ENCODE measurements at regions of chr10 and their contacts with region 1.

Region 1: GRCh38 chr10:110137142-110137545 is 70.3 kb upstream of the MXI1 start:
- DNase-seq: no peak
- H3K4me3 ChIP-seq: peak overlapping the region in 1 of 4 donors; percentile 30
- H3K27ac ChIP-seq: peak overlapping the region in 3 of 5 donors; percentile 40 to 80 (median 74)
- H3K4me1 ChIP-seq: peaks cover 4 to 15% of the 10 kb centered on the region in 2 donors
- H3K27me3 ChIP-seq: no peaks in the 10 kb centered on the region
- CTCF ChIP-seq: peak; percentile 69 to 98 (median 92)
- POLR2A ChIP-seq: no peak

Region 2: GRCh38 chr10:110279407-110279986 is 142.4 kb after region 1 on chr10:
- intact Hi-C with region 1: loop called (anchors 5 kb)
- DNase-seq: peak; percentile 23 to 88 (median 67)
- H3K4me3 ChIP-seq: peak overlapping the region in 1 of 4 donors; percentile 23
- H3K27ac ChIP-seq: peak overlapping the region in 2 of 5 donors; percentile 1 to 15
- H3K4me1 ChIP-seq: peaks cover 0 to 22% of the 10 kb centered on the region in 2 donors
- H3K27me3 ChIP-seq: no peaks in the 10 kb centered on the region
- CTCF ChIP-seq: peak; percentile 45 to 92 (median 88)
- POLR2A ChIP-seq: no peak